Activated CD4-positive, alpha-beta memory T cell treated with anti-CD3 and anti-CD28 coated beads for 36 hours (primary cell): ENCODE measurements at regions of chr5 and their contacts with region 1.

Region 1: DNA sequence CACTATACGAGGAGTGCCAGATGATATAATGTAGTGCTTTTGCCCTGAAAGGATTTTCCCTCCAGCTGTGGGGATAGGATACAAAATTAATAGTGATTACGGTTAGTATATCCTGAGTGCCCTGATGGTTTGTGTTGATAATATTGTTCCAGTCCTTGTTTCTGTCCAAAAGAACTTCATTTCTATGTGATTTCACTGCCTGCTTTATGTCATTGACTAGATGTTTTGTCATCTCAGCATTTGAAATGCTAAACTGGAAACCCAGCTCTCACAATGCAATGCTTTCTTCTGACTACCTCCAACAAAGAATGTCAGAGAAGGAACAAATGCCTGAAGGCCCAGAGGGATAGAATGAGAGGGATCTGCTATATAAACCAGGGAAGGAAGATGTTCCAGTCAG is 177.8 kb downstream of the NIPBL start:
- DNase-seq: no peak
- H3K4me3 Mint-ChIP-seq: no peak overlapping the region
- H3K27ac Mint-ChIP-seq: no peak overlapping the region
- H3K4me1 Mint-ChIP-seq: no peaks in the 10 kb centered on the region
- H3K27me3 Mint-ChIP-seq: no peaks in the 10 kb centered on the region

Region 2: DNA sequence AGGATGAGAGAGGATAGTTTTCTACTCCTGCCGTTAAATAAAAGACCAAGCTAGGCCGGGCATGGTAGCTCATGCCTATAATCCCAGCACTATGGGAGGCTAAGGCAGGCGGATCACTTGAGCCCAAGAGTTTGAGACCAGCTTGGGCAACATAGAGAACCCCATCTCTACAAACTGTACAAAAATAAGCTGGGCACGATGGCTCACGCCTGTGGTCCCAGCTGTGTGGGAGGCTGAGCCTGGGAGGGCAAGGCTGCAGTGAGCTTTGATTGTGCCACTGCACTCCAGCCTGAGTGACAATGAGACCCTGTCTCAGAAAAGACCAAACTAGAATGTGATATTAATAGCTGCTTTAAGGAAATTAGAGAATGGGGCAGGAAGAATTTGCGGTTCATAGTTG is 19.4 kb before region 1 on chr5:
- CTCF ChIA-PET with region 1: no interaction called
- POLR2A ChIA-PET with region 1: no interaction called
- intact Hi-C with region 1: loop called (anchors 1 kb)
- DNase-seq: no peak
- H3K4me3 Mint-ChIP-seq: no peak overlapping the region
- H3K27ac Mint-ChIP-seq: no peak overlapping the region
- H3K4me1 Mint-ChIP-seq: no peaks in the 10 kb centered on the region
- H3K27me3 Mint-ChIP-seq: no peaks in the 10 kb centered on the region